ENCODE measurements at regions of chr6 and their contacts with region 1.

Region 1: GRCh38 chr6:108785653-108786052 is 62.6 kb upstream of the ARMC2 start:
- DNase-seq: no peak
- CTCF ChIP-seq: no peak

Region 2: DNA sequence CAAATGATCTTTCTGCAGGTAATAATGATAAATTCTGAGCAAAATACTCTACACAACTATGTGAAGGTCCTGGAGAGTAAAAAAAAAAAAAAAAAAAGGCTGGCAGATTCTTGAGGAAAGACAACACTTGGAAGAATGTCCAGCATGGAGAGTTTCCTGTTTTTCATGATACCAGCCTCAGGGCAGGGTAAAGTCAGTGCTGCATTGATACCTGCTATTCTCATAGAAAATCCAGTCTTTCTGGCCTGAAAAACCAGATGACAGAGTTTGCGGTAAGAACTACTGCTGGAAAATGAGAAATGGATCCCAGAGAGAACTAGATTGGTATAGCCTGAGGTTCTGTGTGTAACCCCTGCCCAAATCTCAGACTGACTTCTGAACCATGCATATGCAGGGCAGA is 401.7 kb before region 1 on chr6:
- in situ Hi-C with region 1: no loop called
- DNase-seq: no peak
- CTCF ChIP-seq: no peak

Region 3: GRCh38 chr6:108549732-108550131 is 235.9 kb before region 1 on chr6:
- in situ Hi-C with region 1: loop called (anchors 5 kb)
- DNase-seq: no peak
- CTCF ChIP-seq: no peak